ENCODE measurements at regions of chr6 and their contacts with region 1.

Region 1: GRCh38 chr6:135535989-135536414 is 38.5 kb upstream of the AHI1 start:
- DNase-seq: no peak
- H3K4me3 Mint-ChIP-seq: no peak overlapping the region
- H3K27ac Mint-ChIP-seq: no peak overlapping the region
- H3K4me1 Mint-ChIP-seq: peaks cover 14% of the 10 kb centered on the region
- H3K27me3 Mint-ChIP-seq: peaks cover 2% of the 10 kb centered on the region

Region 2: DNA sequence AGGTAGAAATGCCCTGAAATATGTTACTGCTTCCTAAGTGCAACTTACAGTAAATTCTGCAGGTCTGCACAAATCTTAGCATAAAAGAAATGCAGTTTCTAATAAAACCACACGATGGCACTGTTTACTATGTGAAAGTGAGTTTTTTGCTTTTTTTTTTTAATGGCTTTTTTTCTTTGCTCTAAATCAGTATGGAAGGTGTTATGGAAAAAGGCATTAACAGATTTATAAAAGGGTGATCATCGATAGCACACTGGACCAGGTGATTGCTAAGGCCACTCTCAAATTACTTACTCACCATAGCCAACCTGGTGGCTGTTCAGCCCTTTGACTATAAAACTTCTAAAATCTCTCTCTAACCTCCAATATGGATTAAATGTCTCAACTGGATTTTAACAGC is 84.3 kb before region 1 on chr6:
- CTCF ChIA-PET with region 1: interaction called, 9 read pairs
- POLR2A ChIA-PET with region 1: no interaction called
- intact Hi-C with region 1: loop called (anchors 10 kb)
- DNase-seq: no peak
- H3K4me3 Mint-ChIP-seq: no peak overlapping the region
- H3K27ac Mint-ChIP-seq: no peak overlapping the region
- H3K4me1 Mint-ChIP-seq: no peaks in the 10 kb centered on the region
- H3K27me3 Mint-ChIP-seq: no peaks in the 10 kb centered on the region

Region 3: DNA sequence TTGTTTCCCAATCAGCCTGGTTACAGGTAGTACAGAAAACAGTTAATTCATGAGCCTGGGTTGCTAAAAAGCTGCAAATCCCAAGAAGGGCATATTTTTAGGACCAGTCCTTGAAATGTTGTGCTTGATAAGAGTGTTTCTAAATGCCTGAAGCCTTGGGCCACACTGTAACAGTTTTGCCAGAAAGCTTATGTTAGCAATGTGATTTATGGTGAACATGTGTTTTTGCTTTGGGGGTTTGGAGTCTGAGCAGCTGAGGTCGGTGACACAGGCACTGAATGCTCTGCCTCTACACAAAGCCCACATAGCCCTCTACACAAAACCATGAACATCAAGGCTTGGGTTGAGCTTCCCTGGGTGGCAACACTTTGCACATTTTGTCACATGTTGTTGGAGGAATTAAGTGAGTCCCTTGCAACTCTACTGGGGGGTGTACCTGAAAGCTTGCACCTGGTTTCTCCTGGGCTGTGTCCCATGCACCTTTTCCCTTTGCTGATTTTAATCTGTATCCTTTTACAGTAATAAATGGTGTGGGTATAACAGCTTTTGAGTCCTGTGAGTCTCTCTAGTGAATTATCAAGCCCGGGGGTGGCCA is 60.6 kb before region 1 on chr6:
- CTCF ChIA-PET with region 1: no interaction called
- POLR2A ChIA-PET with region 1: no interaction called
- intact Hi-C with region 1: no loop called
- DNase-seq: no peak
- H3K4me3 Mint-ChIP-seq: no peak overlapping the region
- H3K27ac Mint-ChIP-seq: no peak overlapping the region
- H3K4me1 Mint-ChIP-seq: no peaks in the 10 kb centered on the region
- H3K27me3 Mint-ChIP-seq: no peaks in the 10 kb centered on the region

Region 4: GRCh38 chr6:135520781-135521180 is 15.2 kb before region 1 on chr6:
- CTCF ChIA-PET with region 1: interaction called, 11 read pairs
- POLR2A ChIA-PET with region 1: no interaction called
- intact Hi-C with region 1: no loop called
- DNase-seq: no peak
- H3K4me3 Mint-ChIP-seq: no peak overlapping the region
- H3K27ac Mint-ChIP-seq: no peak overlapping the region
- H3K4me1 Mint-ChIP-seq: peaks cover 4% of the 10 kb centered on the region
- H3K27me3 Mint-ChIP-seq: peaks cover 1% of the 10 kb centered on the region

Region 5: GRCh38 chr6:135640449-135641111 is 104.6 kb after region 1 on chr6:
- CTCF ChIA-PET with region 1: no interaction called
- POLR2A ChIA-PET with region 1: no interaction called
- intact Hi-C with region 1: loop called (anchors 2 kb)
- DNase-seq: no peak
- H3K4me3 Mint-ChIP-seq: no peak overlapping the region
- H3K27ac Mint-ChIP-seq: no peak overlapping the region
- H3K4me1 Mint-ChIP-seq: peaks cover 19% of the 10 kb centered on the region
- H3K27me3 Mint-ChIP-seq: peaks cover 1% of the 10 kb centered on the region

Region 6: DNA sequence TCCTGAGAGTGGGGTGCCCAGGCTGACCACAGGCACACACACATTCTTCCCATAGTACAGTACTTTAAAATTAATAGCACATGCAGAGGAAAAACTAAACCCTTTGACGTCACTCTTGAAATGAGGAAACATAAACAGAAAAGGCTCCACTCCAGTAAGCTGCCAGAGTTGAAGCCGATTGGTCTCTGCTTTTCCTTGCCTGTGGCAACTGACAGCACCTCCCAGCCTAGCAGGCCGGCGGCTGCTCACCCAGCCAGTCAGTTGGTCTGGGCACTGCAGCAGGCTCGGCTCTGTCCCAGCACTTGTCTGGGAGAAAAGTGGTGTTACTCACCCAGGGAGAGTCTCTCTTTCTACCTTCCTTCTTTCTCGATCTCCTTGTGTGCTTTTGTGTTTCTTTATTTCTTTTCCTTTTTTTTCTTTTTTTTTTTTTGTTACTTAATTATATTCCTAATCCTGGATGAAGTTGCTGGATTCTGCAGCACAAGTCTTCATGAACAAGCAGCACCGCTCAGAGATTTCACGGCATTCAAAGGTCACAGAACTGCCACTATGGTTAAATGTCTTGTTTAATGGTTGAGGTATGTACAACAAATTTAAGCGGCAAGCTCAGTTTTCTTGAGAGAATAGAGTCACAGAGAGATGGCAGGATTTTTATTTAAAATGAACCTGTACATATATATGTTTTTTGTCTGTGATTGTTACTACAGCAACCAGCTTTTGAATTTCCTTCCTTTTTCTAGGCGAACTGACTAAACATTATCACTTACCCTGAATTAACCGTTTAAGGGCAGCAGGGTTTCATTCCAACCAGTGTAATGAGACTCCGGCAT is 315.7 kb after region 1 on chr6 and contains the start of gene PDE7B:
- CTCF ChIA-PET with region 1: no interaction called
- POLR2A ChIA-PET with region 1: no interaction called
- intact Hi-C with region 1: loop called (anchors 5 kb)
- DNase-seq: peak; percentile 53
- H3K4me3 Mint-ChIP-seq: peak within 1 kb of the TSS; percentile 38
- H3K27ac Mint-ChIP-seq: no peak within 1 kb of the TSS
- H3K4me1 Mint-ChIP-seq: peaks cover 17% of the 10 kb centered on the region
- H3K27me3 Mint-ChIP-seq: peaks cover 1% of the 10 kb centered on the region
- total RNA-seq, gene PDE7B: 0.05 to 0.12 TPM

Region 7: GRCh38 chr6:136317021-136317694 is 781.2 kb after region 1 on chr6:
- CTCF ChIA-PET with region 1: interaction called, 7 read pairs
- POLR2A ChIA-PET with region 1: no interaction called
- intact Hi-C with region 1: loop called (anchors 2 kb)
- DNase-seq: peak; percentile 69
- H3K4me3 Mint-ChIP-seq: no peak overlapping the region
- H3K27ac Mint-ChIP-seq: no peak overlapping the region
- H3K4me1 Mint-ChIP-seq: no peaks in the 10 kb centered on the region
- H3K27me3 Mint-ChIP-seq: no peaks in the 10 kb centered on the region

Measured in activated CD4-positive, alpha-beta memory T cell treated with anti-CD3 and anti-CD28 coated beads for 36 hours (primary cell).